K562 (cell line): ENCODE measurements at regions of chr2 and their contacts with region 1.

Region 1: GRCh38 chr2:210002158-210003157 is at the start of gene RPE:
- DNase-seq: peak; percentile 85 to 94 (median 87)
- ATAC-seq: peak; percentile 99
- H3K4me3 ChIP-seq: peak within 1 kb of the TSS; percentile 74
- H3K27ac ChIP-seq: peak within 1 kb of the TSS; percentile 82
- H3K4me1 ChIP-seq: peaks cover 6 to 18% of the 10 kb centered on the region in 2 experiments; a peak in 4 of 5 replicates
- H3K27me3 ChIP-seq: no peaks in the 10 kb centered on the region
- CTCF ChIP-seq: no peak
- EP300 ChIP-seq: no peak
- POLR2A ChIP-seq: peak; percentile 81
- RAD21 ChIP-seq: no peak
- polyA plus RNA-seq, gene RPE: 43.8 to 57.1 TPM

Region 2: DNA sequence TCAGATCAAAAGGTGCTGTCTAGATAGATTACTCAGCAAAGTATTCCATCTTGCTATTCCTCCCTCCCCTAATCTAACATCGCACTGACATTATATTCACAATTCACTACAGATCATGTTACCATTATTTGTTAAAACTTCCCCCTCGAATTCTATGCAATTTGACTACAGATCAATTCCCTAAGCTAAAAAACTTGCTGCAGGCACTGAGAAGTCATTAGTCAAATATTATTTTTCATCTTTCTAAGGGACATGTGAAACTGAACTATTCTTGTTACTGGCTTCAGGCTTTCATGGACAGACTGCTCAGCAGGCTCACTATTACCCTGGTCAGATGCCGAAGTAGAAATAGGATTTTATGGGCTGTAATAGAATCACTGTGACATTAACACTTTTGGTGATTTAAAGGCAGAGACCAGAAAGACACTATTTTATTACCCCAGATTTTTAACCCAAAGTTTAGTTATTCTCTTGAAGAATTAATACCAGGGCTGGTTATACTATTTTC is 297.5 kb after region 1 on chr2:
- CTCF ChIA-PET with region 1: no interaction called
- POLR2A ChIA-PET with region 1: no interaction called
- in situ Hi-C with region 1: no loop called
- intact Hi-C with region 1: no loop called
- DNase-seq: no peak
- ATAC-seq: no peak
- H3K4me3 ChIP-seq: no peak overlapping the region
- H3K27ac ChIP-seq: no peak overlapping the region
- H3K4me1 ChIP-seq: no peaks in the 10 kb centered on the region
- H3K27me3 ChIP-seq: no peaks in the 10 kb centered on the region
- CTCF ChIP-seq: no peak
- EP300 ChIP-seq: no peak
- POLR2A ChIP-seq: no peak
- RAD21 ChIP-seq: no peak

Region 3: DNA sequence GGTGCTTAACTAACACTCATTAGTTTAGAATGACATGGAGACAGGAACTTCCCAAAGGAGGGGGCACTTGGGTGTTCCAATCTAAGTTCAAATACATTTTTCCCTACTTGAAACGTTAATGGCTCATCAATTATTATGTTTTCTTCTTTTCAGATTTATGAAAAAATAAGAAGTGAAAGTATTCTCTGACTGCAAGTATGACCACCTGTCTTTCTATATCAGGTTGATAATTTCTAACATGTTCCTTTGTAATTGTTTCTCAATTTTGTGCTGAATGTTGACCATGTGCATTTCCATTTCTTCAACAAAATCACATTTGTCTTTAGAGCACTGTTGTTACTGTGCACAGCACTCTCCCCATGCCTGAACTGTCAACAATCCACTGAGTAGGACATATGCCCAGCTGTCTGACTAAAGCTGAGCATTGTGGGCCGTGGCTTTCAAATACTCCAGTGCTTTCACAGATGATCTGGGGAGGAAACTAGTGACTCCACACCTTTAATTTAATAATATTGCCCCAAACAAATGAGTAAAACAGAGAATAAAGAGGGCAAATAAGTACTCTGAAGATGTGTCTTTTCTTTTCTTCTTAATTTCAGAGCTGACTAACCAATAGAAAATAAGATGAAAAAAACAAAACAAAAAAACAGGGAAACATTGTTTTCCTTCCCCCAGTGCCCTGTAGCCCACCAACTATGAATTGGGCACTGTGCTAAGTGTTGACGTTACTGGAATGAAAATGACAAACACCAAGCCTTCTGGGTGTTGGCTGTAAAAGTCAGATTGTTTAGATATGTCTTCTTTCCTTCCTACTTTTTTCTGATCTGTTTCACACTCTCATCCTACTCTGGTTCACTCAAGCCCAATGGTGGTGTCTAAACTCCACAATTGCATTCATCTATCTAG is 458.1 kb after region 1 on chr2:
- CTCF ChIA-PET with region 1: no interaction called
- POLR2A ChIA-PET with region 1: no interaction called
- in situ Hi-C with region 1: loop called (anchors 25 kb)
- intact Hi-C with region 1: no loop called
- DNase-seq: no peak
- ATAC-seq: no peak
- H3K4me3 ChIP-seq: no peak overlapping the region
- H3K27ac ChIP-seq: no peak overlapping the region
- H3K4me1 ChIP-seq: no peaks in the 10 kb centered on the region
- H3K27me3 ChIP-seq: no peaks in the 10 kb centered on the region
- CTCF ChIP-seq: no peak
- EP300 ChIP-seq: no peak
- POLR2A ChIP-seq: no peak
- RAD21 ChIP-seq: no peak

Region 4: GRCh38 chr2:210798180-210798579 is 795.7 kb after region 1 on chr2:
- CTCF ChIA-PET with region 1: no interaction called
- POLR2A ChIA-PET with region 1: no interaction called
- in situ Hi-C with region 1: no loop called
- intact Hi-C with region 1: no loop called
- DNase-seq: no peak
- ATAC-seq: no peak
- H3K4me3 ChIP-seq: no peak overlapping the region
- H3K27ac ChIP-seq: no peak overlapping the region
- H3K4me1 ChIP-seq: no peaks in the 10 kb centered on the region
- H3K27me3 ChIP-seq: no peaks in the 10 kb centered on the region
- CTCF ChIP-seq: no peak
- EP300 ChIP-seq: no peak
- POLR2A ChIP-seq: no peak
- RAD21 ChIP-seq: no peak